ENCODE measurements at regions of chr2 and their contacts with region 1.

Region 1: GRCh38 chr2:189661148-189661956 is at the start of gene ASNSD1:
- DNase-seq: peak; percentile 99
- H3K4me3 ChIP-seq: peak within 1 kb of the TSS; percentile 86
- H3K27me3 ChIP-seq: no peaks in the 10 kb centered on the region
- CTCF ChIP-seq: peak; percentile 92
- polyA plus RNA-seq, gene ASNSD1: 24.1 and 49.6 TPM in 2 replicates

Region 2: GRCh38 chr2:189648846-189649509 is 12.4 kb before region 1 on chr2:
- CTCF ChIA-PET with region 1: interaction called, 10 read pairs
- POLR2A ChIA-PET with region 1: no interaction called
- DNase-seq: no peak
- H3K4me3 ChIP-seq: no peak overlapping the region
- H3K27me3 ChIP-seq: no peaks in the 10 kb centered on the region
- CTCF ChIP-seq: no peak

Region 3: GRCh38 chr2:189674374-189675112 is 13.2 kb after region 1 on chr2 and contains the start of gene ANKAR:
- CTCF ChIA-PET with region 1: interaction called, 76 read pairs
- POLR2A ChIA-PET with region 1: no interaction called
- DNase-seq: peak; percentile 61
- H3K4me3 ChIP-seq: peak within 1 kb of the TSS; percentile 52
- H3K27me3 ChIP-seq: no peaks in the 10 kb centered on the region
- CTCF ChIP-seq: peak; percentile 70
- polyA plus RNA-seq, gene ANKAR: 1.9 and 2.4 TPM in 2 replicates

Region 4: DNA sequence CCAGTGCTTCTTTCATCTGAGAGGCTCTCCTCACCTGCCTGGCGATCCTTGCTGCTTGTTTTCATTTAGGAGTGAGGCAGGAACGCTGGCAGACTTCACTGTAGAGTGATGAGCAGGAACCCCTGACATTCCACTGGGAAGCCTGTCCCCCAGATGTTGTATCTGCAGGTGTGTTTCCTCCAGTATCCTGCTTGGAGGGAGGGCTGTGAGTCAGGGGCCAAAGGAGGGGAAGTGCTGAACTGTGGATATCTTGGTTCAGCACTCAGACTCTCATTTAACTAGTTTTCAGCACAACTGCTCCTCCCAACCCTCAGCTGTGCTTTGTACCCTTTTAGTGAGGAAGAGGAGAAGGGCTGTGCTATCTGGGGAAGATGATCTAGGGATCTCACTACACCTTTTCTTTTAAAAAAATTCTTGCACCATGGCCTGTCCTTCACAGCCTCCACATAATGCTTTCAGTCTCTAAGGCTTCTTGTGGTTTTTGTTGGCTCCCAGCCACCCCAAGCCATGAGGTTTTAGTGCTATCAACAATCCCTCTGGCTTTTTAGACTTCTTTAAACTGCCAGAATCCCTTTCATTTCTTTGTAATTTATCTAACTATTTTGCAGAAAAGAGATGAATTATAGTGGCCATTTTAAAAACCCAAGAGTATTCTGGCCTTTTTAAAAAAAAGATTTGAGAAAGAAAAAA is 24.3 kb after region 1 on chr2:
- CTCF ChIA-PET with region 1: interaction called, 10 read pairs
- POLR2A ChIA-PET with region 1: no interaction called
- DNase-seq: peak; percentile 9
- H3K4me3 ChIP-seq: no peak overlapping the region
- H3K27me3 ChIP-seq: no peaks in the 10 kb centered on the region
- CTCF ChIP-seq: no peak

Measured in BJ (cell line).